Pancreas (tissue), 10 donors: ENCODE measurements at regions of chr7 and their contacts with region 1.

Region 1: DNA sequence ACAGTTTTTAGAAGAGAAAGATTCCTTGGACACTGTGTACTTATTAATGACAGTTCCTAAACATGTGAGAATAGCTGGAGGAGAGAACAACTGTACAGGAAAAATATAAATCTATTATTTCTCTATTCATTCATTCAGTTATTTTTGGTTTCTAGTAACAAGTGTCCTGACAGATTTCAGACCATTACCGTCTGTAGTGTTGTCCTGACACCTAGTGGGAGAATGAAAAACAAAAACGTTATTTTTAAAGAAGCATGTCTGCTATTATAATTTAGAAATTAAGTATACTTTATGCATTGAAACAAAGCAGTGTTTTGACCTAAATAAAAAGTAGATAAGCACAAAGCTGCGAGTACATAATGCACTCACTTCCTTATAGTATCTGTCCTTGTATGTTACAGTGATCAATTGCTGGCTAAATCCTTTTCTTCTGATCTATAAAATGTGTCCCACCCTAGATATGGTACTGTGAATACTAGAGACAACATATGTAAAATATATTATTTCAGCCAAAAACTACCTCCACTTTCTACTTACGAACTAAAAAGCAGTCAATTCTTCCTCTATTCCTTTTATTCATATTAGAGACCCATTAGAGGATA is 575.6 kb downstream of the ARL4A start:
- DNase-seq: no peak
- ATAC-seq: peak in 3 of 4 donors; percentile 68 to 73 (median 71)
- H3K4me3 ChIP-seq: no peak overlapping the region
- H3K27ac ChIP-seq: no peak overlapping the region
- H3K4me1 ChIP-seq: no peaks in the 10 kb centered on the region
- H3K27me3 ChIP-seq: no peaks in the 10 kb centered on the region
- CTCF ChIP-seq: peak in 2 of 4 donors; percentile 27 to 46

Region 2: DNA sequence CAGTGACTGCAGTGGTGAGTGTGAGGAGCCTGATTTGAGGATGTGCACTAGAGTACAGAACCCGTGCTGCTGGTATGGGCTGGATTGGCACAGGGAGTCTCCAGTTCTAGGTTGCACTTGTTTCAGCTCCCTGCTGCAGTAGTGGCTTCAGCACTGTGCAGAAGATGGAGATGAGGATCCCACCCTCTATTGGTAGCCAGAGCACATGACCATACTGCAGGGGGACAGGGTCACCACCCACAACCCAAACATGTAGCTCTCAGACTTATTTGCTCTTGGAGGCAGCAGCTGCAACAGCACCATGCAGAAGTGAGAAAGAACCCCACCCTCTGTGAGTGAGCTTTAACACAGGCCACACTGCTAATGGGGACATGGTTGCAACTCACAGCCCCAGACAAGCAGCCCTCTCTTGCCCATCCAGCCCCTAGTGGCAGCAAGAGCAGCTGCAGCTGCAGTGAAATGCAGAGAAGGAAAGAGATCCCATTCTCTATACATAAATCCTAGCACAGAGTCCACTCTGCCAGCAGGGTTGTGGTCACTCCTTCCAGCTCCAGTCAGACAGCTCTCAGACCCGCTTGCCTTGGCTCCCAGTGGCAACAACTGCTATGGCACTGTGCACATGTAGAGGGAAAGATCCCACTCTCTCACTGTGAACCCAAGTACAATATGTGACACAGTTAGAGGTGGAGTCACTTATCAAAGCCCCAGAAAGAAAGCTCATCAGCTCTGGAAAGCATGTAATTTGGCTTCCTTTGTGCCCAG is 743.9 kb before region 1 on chr7:
- intact Hi-C with region 1: loop called in 2 of 3 experiments (anchors 5 to 10 kb)
- DNase-seq: no peak
- ATAC-seq: peak in 1 of 4 donors; percentile 32
- H3K4me3 ChIP-seq: no peak overlapping the region
- H3K27ac ChIP-seq: no peak overlapping the region
- H3K4me1 ChIP-seq: no peaks in the 10 kb centered on the region
- H3K27me3 ChIP-seq: no peaks in the 10 kb centered on the region
- CTCF ChIP-seq: no peak

Region 3: GRCh38 chr7:12524794-12525386 is 738.1 kb before region 1 on chr7:
- intact Hi-C with region 1: loop called in 1 of 3 experiments (anchors 5 kb)
- DNase-seq: no peak
- ATAC-seq: peak in 3 of 4 donors; percentile 66 to 72 (median 68)
- H3K4me3 ChIP-seq: no peak overlapping the region
- H3K27ac ChIP-seq: no peak overlapping the region
- H3K4me1 ChIP-seq: no peaks in the 10 kb centered on the region
- H3K27me3 ChIP-seq: peaks cover 0 to 4% (median 0%) of the 10 kb centered on the region in 4 donors
- CTCF ChIP-seq: peak; percentile 25 to 59 (median 42)

Region 4: DNA sequence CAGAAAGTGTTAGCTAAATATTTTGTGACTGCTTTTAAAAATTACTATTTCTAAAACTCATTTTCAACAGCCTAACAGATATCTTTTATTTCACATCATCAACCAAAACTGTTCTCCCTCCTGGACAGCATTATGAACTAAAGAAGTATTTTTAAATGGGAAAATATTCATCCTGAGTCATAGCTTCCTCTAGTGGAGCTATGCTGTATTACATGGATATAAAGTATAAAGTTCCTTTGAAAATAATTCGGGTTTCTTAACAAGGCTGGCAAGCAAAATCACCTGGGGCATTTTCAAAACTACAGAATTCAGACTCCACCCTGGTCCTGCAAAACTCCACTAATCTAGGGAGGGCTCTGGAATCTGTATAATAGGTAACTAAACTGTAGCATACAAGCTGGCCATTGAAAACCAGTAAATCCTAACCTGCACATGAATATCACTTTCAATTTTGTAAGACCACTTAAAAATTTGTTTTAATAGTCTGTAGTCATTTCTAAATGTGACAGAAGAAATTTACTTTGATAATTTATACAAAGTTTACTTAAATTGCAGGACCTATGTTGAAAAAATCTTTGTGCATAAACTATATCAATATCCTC is 639.0 kb before region 1 on chr7:
- intact Hi-C with region 1: no loop called
- DNase-seq: no peak
- ATAC-seq: peak in 3 of 4 donors; percentile 71 to 89 (median 80)
- H3K4me3 ChIP-seq: no peak overlapping the region
- H3K27ac ChIP-seq: no peak overlapping the region
- H3K4me1 ChIP-seq: peaks cover 0 to 10% (median 0%) of the 10 kb centered on the region in 3 donors
- H3K27me3 ChIP-seq: peaks cover 0 to 5% (median 0%) of the 10 kb centered on the region in 4 donors
- CTCF ChIP-seq: peak; percentile 27 to 70 (median 66)

Region 5: DNA sequence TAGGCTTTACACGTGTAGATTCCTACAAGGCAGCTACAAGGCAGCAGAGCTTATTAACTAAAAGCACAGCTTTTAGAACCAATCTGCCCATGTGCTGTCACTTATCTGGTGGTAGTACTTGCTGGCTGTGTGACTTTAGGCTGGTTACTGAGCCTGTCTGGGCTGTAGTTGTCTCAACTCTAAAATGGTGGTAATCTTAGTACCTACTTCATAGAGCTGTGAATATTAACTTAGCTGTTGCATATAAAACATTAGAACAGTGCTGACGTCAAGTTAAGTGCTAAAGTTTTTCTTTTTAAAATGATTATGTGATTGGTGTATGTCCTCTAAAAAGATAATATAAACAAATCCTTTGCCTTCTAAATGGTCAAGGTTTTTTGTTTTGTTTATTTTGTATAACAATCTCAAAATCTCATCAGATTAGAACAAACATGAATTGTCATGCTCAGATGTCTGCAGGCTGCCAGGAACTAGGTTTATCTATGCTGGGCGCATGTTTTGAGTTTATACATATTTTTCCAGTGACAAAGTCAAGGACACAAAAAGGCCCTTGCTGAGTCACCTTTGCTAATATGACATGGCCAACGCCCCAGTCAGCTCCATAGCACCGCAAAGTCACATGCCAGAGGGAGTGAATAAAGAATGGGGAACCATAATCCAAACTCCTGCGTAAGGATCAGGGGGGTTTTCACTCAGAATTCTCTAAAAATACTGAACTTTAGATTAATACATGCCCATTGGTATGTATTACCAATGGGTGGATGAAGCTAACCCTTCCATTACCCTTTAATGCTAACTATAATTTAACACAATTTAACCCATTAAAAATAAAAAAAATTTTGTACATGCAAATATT is 615.4 kb before region 1 on chr7:
- intact Hi-C with region 1: loop called in 2 of 3 experiments (anchors 5 to 10 kb)
- DNase-seq: peak in 2 of 6 donors; percentile 6 to 33
- ATAC-seq: peak; percentile 49 to 81 (median 54)
- H3K4me3 ChIP-seq: no peak overlapping the region
- H3K27ac ChIP-seq: no peak overlapping the region
- H3K4me1 ChIP-seq: no peaks in the 10 kb centered on the region
- H3K27me3 ChIP-seq: no peaks in the 10 kb centered on the region
- CTCF ChIP-seq: no peak

Region 6: GRCh38 chr7:12757443-12757842 is 505.6 kb before region 1 on chr7:
- intact Hi-C with region 1: no loop called
- DNase-seq: no peak
- ATAC-seq: peak in 1 of 4 donors; percentile 43
- H3K4me3 ChIP-seq: no peak overlapping the region
- H3K27ac ChIP-seq: no peak overlapping the region
- H3K4me1 ChIP-seq: no peaks in the 10 kb centered on the region
- H3K27me3 ChIP-seq: no peaks in the 10 kb centered on the region
- CTCF ChIP-seq: no peak

Region 7: GRCh38 chr7:12800486-12800885 is 462.5 kb before region 1 on chr7:
- intact Hi-C with region 1: no loop called
- DNase-seq: no peak
- ATAC-seq: peak in 1 of 4 donors; percentile 10
- H3K4me3 ChIP-seq: no peak overlapping the region
- H3K27ac ChIP-seq: no peak overlapping the region
- H3K4me1 ChIP-seq: peaks cover 12 to 20% (median 16%) of the 10 kb centered on the region in 3 donors
- H3K27me3 ChIP-seq: no peaks in the 10 kb centered on the region
- CTCF ChIP-seq: no peak